ENCODE measurements at regions of chrX and their contacts with region 1.

Region 1: GRCh38 chrX:147803948-147804347 is 107.8 kb upstream of the FMR1 start:
- DNase-seq: no peak
- H3K4me3 ChIP-seq: no peak overlapping the region
- H3K27ac ChIP-seq: no peak overlapping the region
- H3K4me1 ChIP-seq: no peaks in the 10 kb centered on the region
- H3K27me3 ChIP-seq: no peaks in the 10 kb centered on the region
- CTCF ChIP-seq: peak; percentile 18

Region 2: GRCh38 chrX:147476008-147476407 is 327.9 kb before region 1 on chrX:
- intact Hi-C with region 1: loop called (anchors 10 kb)
- DNase-seq: no peak
- H3K4me3 ChIP-seq: no peak overlapping the region
- H3K27ac ChIP-seq: no peak overlapping the region
- H3K4me1 ChIP-seq: no peaks in the 10 kb centered on the region
- H3K27me3 ChIP-seq: no peaks in the 10 kb centered on the region
- CTCF ChIP-seq: no peak